SK-N-SH (cell line): ENCODE measurements at regions of chr1 and their contacts with region 1.

Region 1: GRCh38 chr1:21594935-21595897 is 73.9 kb downstream of the RAP1GAP start:
- DNase-seq: peak; percentile 86
- H3K4me3 ChIP-seq: no peak overlapping the region; a peak in 1 of 4 replicates
- H3K27ac ChIP-seq: no peak overlapping the region
- H3K4me1 ChIP-seq: peaks cover 0 to 13% of the 10 kb centered on the region in 2 experiments; a peak in 2 of 4 replicates
- H3K27me3 ChIP-seq: no peaks in the 10 kb centered on the region
- CTCF ChIP-seq: peak; percentile 73
- EP300 ChIP-seq: no peak
- RAD21 ChIP-seq: peak; percentile 74

Region 2: GRCh38 chr1:21607549-21608529 is 12.6 kb after region 1 on chr1:
- CTCF ChIA-PET with region 1: interaction called, 28 read pairs
- POLR2A ChIA-PET with region 1: no interaction called
- DNase-seq: peak; percentile 70
- H3K4me3 ChIP-seq: no peak overlapping the region
- H3K27ac ChIP-seq: no peak overlapping the region
- H3K4me1 ChIP-seq: no peaks in the 10 kb centered on the region
- H3K27me3 ChIP-seq: peaks cover 13% of the 10 kb centered on the region
- CTCF ChIP-seq: no peak
- EP300 ChIP-seq: no peak
- RAD21 ChIP-seq: no peak